ENCODE measurements at regions of chr16 and their contacts with region 1.

Region 1: DNA sequence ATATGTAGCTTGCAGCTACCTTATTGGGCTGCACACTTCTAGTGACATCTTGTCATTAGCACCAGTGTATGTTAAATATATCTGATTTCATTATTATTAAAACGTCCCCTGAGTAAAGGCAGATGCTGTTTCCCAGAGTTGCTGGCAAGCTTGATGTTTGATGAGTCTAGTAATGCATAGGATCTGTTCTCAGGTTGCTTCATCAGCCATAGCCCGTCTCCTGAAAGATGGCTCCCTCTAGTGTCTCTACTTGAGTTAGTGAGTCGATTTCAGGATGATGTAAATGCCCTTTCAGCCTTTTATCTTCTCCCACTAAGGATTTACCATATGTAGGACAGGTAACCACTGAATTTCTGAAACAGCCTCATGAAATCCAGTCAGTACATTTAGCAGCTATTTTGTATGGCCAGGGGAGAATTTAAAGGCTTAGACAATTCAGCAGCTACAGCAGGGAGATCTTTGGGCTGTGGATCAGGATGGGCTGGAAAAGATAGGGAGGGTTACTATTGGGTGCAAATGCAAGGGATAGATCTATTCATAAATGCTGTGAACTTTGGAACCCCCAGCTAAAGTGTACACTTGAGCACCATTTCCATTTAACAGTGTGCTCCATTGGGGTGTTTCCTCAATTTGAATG is 376.3 kb downstream of the CNTNAP4 start:
- DNase-seq: peak; percentile 50 to 73
- H3K4me3 ChIP-seq: no peak overlapping the region
- H3K4me3 Mint-ChIP-seq: no peak overlapping the region
- H3K27ac Mint-ChIP-seq: no peak overlapping the region
- H3K4me1 ChIP-seq: no peaks in the 10 kb centered on the region; the same call in 1 of the 2 replicates
- H3K4me1 Mint-ChIP-seq: peaks cover 16% of the 10 kb centered on the region
- H3K27me3 ChIP-seq: no peaks in the 10 kb centered on the region
- H3K27me3 Mint-ChIP-seq: peaks cover 2% of the 10 kb centered on the region
- CTCF ChIP-seq: peak; percentile 75 to 86

Region 2: GRCh38 chr16:75789237-75789636 is 864.3 kb before region 1 on chr16:
- CTCF ChIA-PET with region 1: no interaction called
- POLR2A ChIA-PET with region 1: no interaction called
- intact Hi-C with region 1: loop called (anchors 1 kb)
- DNase-seq: peak in 1 of 2 experiments; percentile 65
- H3K4me3 ChIP-seq: no peak overlapping the region
- H3K4me3 Mint-ChIP-seq: no peak overlapping the region
- H3K27ac Mint-ChIP-seq: peak overlapping the region; percentile 17
- H3K4me1 ChIP-seq: no peaks in the 10 kb centered on the region
- H3K4me1 Mint-ChIP-seq: peaks cover 5% of the 10 kb centered on the region
- H3K27me3 ChIP-seq: no peaks in the 10 kb centered on the region
- H3K27me3 Mint-ChIP-seq: peaks cover 2% of the 10 kb centered on the region
- CTCF ChIP-seq: peak; percentile 81 to 90

Region 3: GRCh38 chr16:76278980-76279379 is 374.5 kb before region 1 on chr16:
- CTCF ChIA-PET with region 1: interaction called, 11 read pairs
- POLR2A ChIA-PET with region 1: no interaction called
- intact Hi-C with region 1: loop called (anchors 1 kb)
- DNase-seq: peak in 1 of 2 experiments; percentile 26
- H3K4me3 ChIP-seq: no peak overlapping the region
- H3K4me3 Mint-ChIP-seq: no peak overlapping the region
- H3K27ac Mint-ChIP-seq: no peak overlapping the region
- H3K4me1 ChIP-seq: no peaks in the 10 kb centered on the region
- H3K4me1 Mint-ChIP-seq: no peaks in the 10 kb centered on the region
- H3K27me3 ChIP-seq: no peaks in the 10 kb centered on the region
- H3K27me3 Mint-ChIP-seq: no peaks in the 10 kb centered on the region
- CTCF ChIP-seq: peak; percentile 32 to 44

Region 4: DNA sequence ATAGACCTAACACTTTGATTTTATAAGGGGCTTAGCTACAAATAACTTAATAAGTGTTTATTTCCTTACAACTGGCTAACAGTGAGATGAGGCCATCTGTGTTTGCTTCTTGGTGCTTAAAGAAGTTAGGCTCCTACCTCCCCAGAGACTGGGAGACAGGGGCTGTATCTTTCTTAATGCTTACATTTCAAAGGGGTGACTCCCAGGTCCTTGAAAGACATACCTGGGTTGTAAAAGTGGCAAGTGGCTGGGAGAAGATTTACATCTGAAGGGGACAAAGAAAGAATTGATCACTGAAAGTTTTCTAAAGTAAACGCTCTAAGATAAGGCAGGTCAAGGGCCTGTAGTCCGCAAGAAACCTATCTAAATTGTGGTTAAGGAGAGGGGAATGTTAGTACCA is 179.5 kb before region 1 on chr16:
- CTCF ChIA-PET with region 1: no interaction called
- POLR2A ChIA-PET with region 1: no interaction called
- intact Hi-C with region 1: loop called (anchors 10 kb)
- DNase-seq: peak; percentile 33 to 43
- H3K4me3 ChIP-seq: no peak overlapping the region
- H3K4me3 Mint-ChIP-seq: peak overlapping the region; percentile 34
- H3K27ac Mint-ChIP-seq: no peak overlapping the region
- H3K4me1 ChIP-seq: peaks cover 6% of the 10 kb centered on the region; the same call in 1 of the 2 replicates
- H3K4me1 Mint-ChIP-seq: peaks cover 18% of the 10 kb centered on the region
- H3K27me3 ChIP-seq: no peaks in the 10 kb centered on the region
- H3K27me3 Mint-ChIP-seq: no peaks in the 10 kb centered on the region
- CTCF ChIP-seq: no peak

Region 5: DNA sequence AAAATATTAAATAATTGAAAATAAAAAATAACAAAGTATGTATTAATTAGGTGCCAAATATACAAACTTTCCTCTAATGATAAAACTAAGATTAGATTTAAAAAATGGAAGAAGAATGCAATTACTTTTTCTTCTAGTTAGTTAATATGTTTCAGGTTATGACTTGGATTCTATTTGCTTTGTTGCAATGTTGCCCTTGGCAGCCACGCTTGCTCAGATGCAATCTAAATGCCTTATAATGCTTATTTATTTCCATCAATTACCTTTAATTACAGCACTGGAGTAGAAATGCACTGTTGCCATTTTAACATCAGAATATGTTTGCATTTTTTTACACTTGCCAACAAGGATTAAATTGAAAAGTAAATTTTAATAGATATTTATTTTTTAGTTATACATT is 112.4 kb before region 1 on chr16:
- CTCF ChIA-PET with region 1: no interaction called
- POLR2A ChIA-PET with region 1: no interaction called
- intact Hi-C with region 1: loop called (anchors 5 kb)
- DNase-seq: no peak
- H3K4me3 ChIP-seq: no peak overlapping the region
- H3K4me3 Mint-ChIP-seq: no peak overlapping the region
- H3K27ac Mint-ChIP-seq: no peak overlapping the region
- H3K4me1 ChIP-seq: peaks cover 24% of the 10 kb centered on the region
- H3K4me1 Mint-ChIP-seq: no peaks in the 10 kb centered on the region
- H3K27me3 ChIP-seq: no peaks in the 10 kb centered on the region
- H3K27me3 Mint-ChIP-seq: no peaks in the 10 kb centered on the region
- CTCF ChIP-seq: no peak

Region 6: GRCh38 chr16:76577003-76577402 is 76.5 kb before region 1 on chr16:
- CTCF ChIA-PET with region 1: no interaction called
- POLR2A ChIA-PET with region 1: no interaction called
- intact Hi-C with region 1: loop called (anchors 1 kb)
- DNase-seq: no peak
- H3K4me3 ChIP-seq: no peak overlapping the region
- H3K4me3 Mint-ChIP-seq: no peak overlapping the region
- H3K27ac Mint-ChIP-seq: peak overlapping the region; percentile 79
- H3K4me1 ChIP-seq: peaks cover 44% of the 10 kb centered on the region
- H3K4me1 Mint-ChIP-seq: peaks cover 26% of the 10 kb centered on the region
- H3K27me3 ChIP-seq: no peaks in the 10 kb centered on the region
- H3K27me3 Mint-ChIP-seq: no peaks in the 10 kb centered on the region
- CTCF ChIP-seq: no peak